ENCODE measurements at regions of chr19 and their contacts with region 1.

Region 1: GRCh38 chr19:16301999-16302694 is 22.5 kb upstream of the KLF2 start:
- DNase-seq: peak; percentile 46
- ATAC-seq: peak; percentile 78
- H3K4me3 ChIP-seq: no peak overlapping the region
- H3K4me3 Mint-ChIP-seq: peak overlapping the region; percentile 33
- H3K27ac ChIP-seq: peak overlapping the region; percentile 44 to 48
- H3K27ac Mint-ChIP-seq: peak overlapping the region; percentile 76
- H3K4me1 ChIP-seq: peaks cover 0 to 15% of the 10 kb centered on the region in 2 donors
- H3K4me1 Mint-ChIP-seq: peaks cover 13% of the 10 kb centered on the region
- H3K27me3 ChIP-seq: no peaks in the 10 kb centered on the region
- H3K27me3 Mint-ChIP-seq: no peaks in the 10 kb centered on the region
- CTCF ChIP-seq: no peak

Region 2: GRCh38 chr19:15986701-15987100 is 315.4 kb before region 1 on chr19:
- CTCF ChIA-PET with region 1: no interaction called
- POLR2A ChIA-PET with region 1: no interaction called
- intact Hi-C with region 1: no loop called
- DNase-seq: no peak
- ATAC-seq: no peak
- H3K4me3 ChIP-seq: no peak overlapping the region
- H3K4me3 Mint-ChIP-seq: no peak overlapping the region
- H3K27ac ChIP-seq: no peak overlapping the region
- H3K27ac Mint-ChIP-seq: no peak overlapping the region
- H3K4me1 ChIP-seq: no peaks in the 10 kb centered on the region
- H3K4me1 Mint-ChIP-seq: peaks cover 5% of the 10 kb centered on the region
- H3K27me3 ChIP-seq: peaks cover 0 to 23% (median 12%) of the 10 kb centered on the region in 4 experiments
- H3K27me3 Mint-ChIP-seq: peaks cover 28% of the 10 kb centered on the region
- CTCF ChIP-seq: no peak

Region 3: DNA sequence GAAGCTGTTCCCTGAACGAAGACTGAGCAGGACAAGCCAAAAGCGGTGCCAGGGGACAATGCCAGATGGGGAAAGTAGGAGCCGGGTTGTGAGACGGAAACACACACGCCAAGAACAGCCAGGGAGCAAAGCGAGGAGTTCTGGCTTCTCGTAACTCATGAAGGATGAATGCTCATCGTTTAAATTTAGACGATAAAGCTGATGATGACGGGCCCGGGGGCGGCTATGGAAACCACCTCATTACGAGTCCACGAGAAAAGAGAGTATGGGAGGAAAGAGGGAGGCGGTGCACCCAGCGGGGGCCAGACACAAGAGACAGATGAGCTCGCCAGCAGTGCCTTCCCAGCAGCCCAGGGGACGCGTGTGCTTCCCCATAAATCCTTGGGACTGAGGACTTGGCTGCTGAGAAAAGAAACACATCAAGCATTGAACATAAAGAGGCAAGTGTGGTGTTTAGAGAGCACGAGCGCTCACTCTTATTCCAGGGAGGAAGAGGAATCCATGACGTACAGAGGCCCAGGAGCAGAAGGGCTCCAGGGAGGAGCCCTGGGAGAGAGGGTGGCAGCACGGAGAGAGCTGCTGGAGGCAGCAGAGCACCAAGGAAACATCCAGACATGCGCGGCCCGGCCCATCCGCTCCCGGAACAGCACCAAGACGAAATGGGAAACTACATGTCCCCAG is 98.9 kb after region 1 on chr19:
- CTCF ChIA-PET with region 1: no interaction called
- POLR2A ChIA-PET with region 1: interaction called, 10 read pairs
- intact Hi-C with region 1: no loop called
- DNase-seq: no peak
- ATAC-seq: no peak
- H3K4me3 ChIP-seq: no peak overlapping the region
- H3K4me3 Mint-ChIP-seq: no peak overlapping the region
- H3K27ac ChIP-seq: peak overlapping the region in 1 of 2 donors; percentile 27
- H3K27ac Mint-ChIP-seq: peak overlapping the region; percentile 64
- H3K4me1 ChIP-seq: peaks cover 44 to 58% of the 10 kb centered on the region in 2 donors
- H3K4me1 Mint-ChIP-seq: peaks cover 56% of the 10 kb centered on the region
- H3K27me3 ChIP-seq: no peaks in the 10 kb centered on the region
- H3K27me3 Mint-ChIP-seq: no peaks in the 10 kb centered on the region
- CTCF ChIP-seq: no peak

Region 4: GRCh38 chr19:16446724-16447368 is 144.7 kb after region 1 on chr19:
- CTCF ChIA-PET with region 1: no interaction called
- POLR2A ChIA-PET with region 1: no interaction called
- intact Hi-C with region 1: no loop called
- DNase-seq: peak; percentile 79
- ATAC-seq: peak; percentile 34
- H3K4me3 ChIP-seq: peak overlapping the region in 1 of 5 experiments; percentile 26
- H3K4me3 Mint-ChIP-seq: peak overlapping the region; percentile 76
- H3K27ac ChIP-seq: peak overlapping the region; percentile 93 to 98
- H3K27ac Mint-ChIP-seq: peak overlapping the region; percentile 97
- H3K4me1 ChIP-seq: peaks cover 86 to 94% of the 10 kb centered on the region in 2 donors
- H3K4me1 Mint-ChIP-seq: peaks cover 85% of the 10 kb centered on the region
- H3K27me3 ChIP-seq: no peaks in the 10 kb centered on the region
- H3K27me3 Mint-ChIP-seq: no peaks in the 10 kb centered on the region
- CTCF ChIP-seq: no peak